CD8-positive, alpha-beta T cell (primary cell): ENCODE measurements at regions of chr1 and their contacts with region 1.

Region 1: GRCh38 chr1:184322253-184322652 is 64.6 kb upstream of the C1orf21 start:
- DNase-seq: no peak
- ATAC-seq: no peak
- H3K4me3 ChIP-seq: no peak overlapping the region
- H3K4me3 Mint-ChIP-seq: no peak overlapping the region
- H3K27ac ChIP-seq: no peak overlapping the region
- H3K27ac Mint-ChIP-seq: no peak overlapping the region
- H3K4me1 ChIP-seq: no peaks in the 10 kb centered on the region
- H3K4me1 Mint-ChIP-seq: no peaks in the 10 kb centered on the region
- H3K27me3 ChIP-seq: no peaks in the 10 kb centered on the region
- H3K27me3 Mint-ChIP-seq: peaks cover 11% of the 10 kb centered on the region
- CTCF ChIP-seq: no peak

Region 2: GRCh38 chr1:184296466-184297243 is 25.6 kb before region 1 on chr1:
- CTCF ChIA-PET with region 1: no interaction called
- POLR2A ChIA-PET with region 1: no interaction called
- intact Hi-C with region 1: loop called in 1 of 2 experiments (anchors 2 kb)
- DNase-seq: no peak
- ATAC-seq: no peak
- H3K4me3 ChIP-seq: no peak overlapping the region
- H3K4me3 Mint-ChIP-seq: no peak overlapping the region
- H3K27ac ChIP-seq: no peak overlapping the region
- H3K27ac Mint-ChIP-seq: no peak overlapping the region
- H3K4me1 ChIP-seq: no peaks in the 10 kb centered on the region
- H3K4me1 Mint-ChIP-seq: no peaks in the 10 kb centered on the region
- H3K27me3 ChIP-seq: no peaks in the 10 kb centered on the region
- H3K27me3 Mint-ChIP-seq: peaks cover 5% of the 10 kb centered on the region
- CTCF ChIP-seq: no peak

Region 3: DNA sequence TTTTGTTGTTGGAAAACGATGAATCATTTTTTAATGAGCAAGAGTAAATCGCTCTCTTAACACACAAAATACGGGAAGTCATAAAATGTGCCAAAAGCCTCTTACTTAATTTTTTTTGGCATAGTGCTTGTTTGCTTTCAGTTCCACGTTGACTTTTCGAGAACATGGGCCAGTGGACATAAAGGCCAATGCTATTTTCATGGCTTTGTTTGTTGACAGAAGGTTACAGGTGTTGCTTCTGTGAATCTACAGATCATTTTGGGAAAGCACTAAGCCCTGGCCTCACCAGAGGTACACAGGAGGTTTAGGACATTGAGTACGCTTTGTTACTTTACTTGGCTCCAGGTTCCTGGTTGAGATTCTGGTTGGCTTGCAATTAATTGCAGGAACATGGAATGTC is 1212.5 kb after region 1 on chr1:
- CTCF ChIA-PET with region 1: no interaction called
- POLR2A ChIA-PET with region 1: no interaction called
- intact Hi-C with region 1: no loop called
- DNase-seq: no peak
- ATAC-seq: no peak
- H3K4me3 ChIP-seq: no peak overlapping the region
- H3K4me3 Mint-ChIP-seq: no peak overlapping the region
- H3K27ac ChIP-seq: no peak overlapping the region
- H3K27ac Mint-ChIP-seq: no peak overlapping the region
- H3K4me1 ChIP-seq: no peaks in the 10 kb centered on the region
- H3K4me1 Mint-ChIP-seq: peaks cover 5% of the 10 kb centered on the region
- H3K27me3 ChIP-seq: no peaks in the 10 kb centered on the region
- H3K27me3 Mint-ChIP-seq: no peaks in the 10 kb centered on the region
- CTCF ChIP-seq: no peak